ENCODE measurements at regions of chr5 and their contacts with region 1.

Region 1: GRCh38 chr5:76771705-76772405 is 47.0 kb upstream of the F2RL1 start:
- DNase-seq: no peak
- CTCF ChIP-seq: no peak

Region 2: GRCh38 chr5:76590027-76590426 is 181.8 kb before region 1 on chr5:
- CTCF ChIA-PET with region 1: interaction called, 10 read pairs
- POLR2A ChIA-PET with region 1: no interaction called
- DNase-seq: peak; percentile 60
- CTCF ChIP-seq: no peak

Region 3: GRCh38 chr5:76634661-76635060 is 137.2 kb before region 1 on chr5:
- CTCF ChIA-PET with region 1: interaction called, 12 read pairs
- POLR2A ChIA-PET with region 1: no interaction called
- DNase-seq: no peak
- CTCF ChIP-seq: no peak

Region 4: DNA sequence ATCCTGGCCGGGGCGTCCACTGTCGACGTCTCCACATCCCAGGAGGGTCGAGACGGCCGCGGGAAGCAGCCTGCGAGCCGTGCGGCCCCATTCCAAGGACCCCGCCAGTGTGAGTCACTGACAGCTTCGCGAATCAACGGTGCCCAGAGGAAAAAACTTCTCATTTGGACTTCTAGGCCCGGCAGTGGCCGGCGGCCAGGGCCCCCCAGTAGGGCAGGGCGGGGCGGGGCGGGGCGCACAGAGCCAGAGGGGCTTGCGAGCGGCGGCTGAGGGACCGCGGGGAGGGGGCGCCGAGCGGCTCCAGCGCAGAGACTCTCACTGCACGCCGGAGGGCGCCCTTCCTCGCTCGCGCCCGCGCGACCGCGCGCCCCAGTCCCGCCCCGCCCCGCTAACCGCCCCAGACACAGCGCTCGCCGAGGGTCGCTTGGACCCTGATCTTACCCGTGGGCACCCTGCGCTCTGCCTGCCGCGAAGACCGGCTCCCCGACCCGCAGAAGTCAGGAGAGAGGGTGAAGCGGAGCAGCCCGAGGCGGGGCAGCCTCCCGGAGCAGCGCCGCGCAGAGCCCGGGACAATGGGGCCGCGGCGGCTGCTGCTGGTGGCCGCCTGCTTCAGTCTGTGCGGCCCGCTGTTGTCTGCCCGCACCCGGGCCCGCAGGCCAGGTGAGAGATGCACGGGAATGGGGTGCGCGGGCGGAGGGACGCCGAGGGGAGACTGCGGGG is 56.0 kb before region 1 on chr5 and contains the start of gene F2R:
- CTCF ChIA-PET with region 1: interaction called, 14 read pairs
- POLR2A ChIA-PET with region 1: no interaction called
- DNase-seq: peak; percentile 81
- CTCF ChIP-seq: peak; percentile 49

Region 5: DNA sequence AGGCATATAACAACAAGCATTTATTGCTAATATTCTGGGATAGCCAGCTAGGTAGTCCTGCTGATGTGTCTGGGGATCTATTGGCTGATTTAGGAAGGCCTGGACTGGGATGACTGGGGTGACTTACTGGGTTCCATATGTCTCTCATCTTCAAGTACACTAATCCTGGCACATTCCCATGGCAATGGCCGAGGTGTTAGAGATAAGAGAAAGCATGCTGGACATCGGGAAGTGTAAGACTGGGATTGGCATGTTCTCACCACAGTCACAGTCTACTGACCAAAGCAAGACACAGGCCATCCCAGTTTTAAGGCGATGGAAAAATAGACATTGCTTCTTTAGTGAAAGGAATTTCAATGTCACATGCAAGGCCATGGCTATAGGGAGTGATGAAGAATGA is 26.2 kb before region 1 on chr5:
- CTCF ChIA-PET with region 1: interaction called, 18 read pairs
- POLR2A ChIA-PET with region 1: no interaction called
- DNase-seq: no peak
- CTCF ChIP-seq: no peak

Region 6: GRCh38 chr5:76805850-76806505 is 34.1 kb after region 1 on chr5:
- CTCF ChIA-PET with region 1: interaction called, 16 read pairs
- POLR2A ChIA-PET with region 1: no interaction called
- DNase-seq: no peak
- CTCF ChIP-seq: no peak

Region 7: DNA sequence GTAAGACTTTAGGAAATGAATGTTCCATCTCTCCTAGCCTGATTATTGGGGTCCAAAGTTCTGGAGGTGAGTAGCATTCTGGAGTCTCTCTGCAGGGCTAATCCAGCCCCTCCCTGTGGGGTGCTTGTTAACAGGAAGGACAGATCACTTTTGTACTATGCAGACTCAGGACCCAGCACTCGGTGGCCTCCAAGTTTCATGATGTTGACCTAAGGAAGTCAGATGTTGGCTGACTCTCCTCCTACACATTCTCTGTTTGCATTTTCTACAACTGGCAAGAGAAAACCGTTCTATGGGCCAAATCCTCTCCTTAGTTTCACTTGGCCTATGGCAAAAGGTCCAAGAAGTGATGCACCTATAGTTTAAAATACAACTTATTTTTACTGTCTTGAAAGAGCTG is 433.1 kb after region 1 on chr5:
- CTCF ChIA-PET with region 1: no interaction called
- POLR2A ChIA-PET with region 1: no interaction called
- DNase-seq: no peak
- CTCF ChIP-seq: no peak